ENCODE measurements at regions of chr10 and their contacts with region 1.

Region 1: GRCh38 chr10:51010977-51011376 is 63.3 kb upstream of the PRKG1 start:
- DNase-seq: no peak
- H3K4me3 ChIP-seq: no peak overlapping the region
- H3K27ac ChIP-seq: no peak overlapping the region
- H3K4me1 ChIP-seq: peaks cover 0 to 10% (median 6%) of the 10 kb centered on the region in 4 donors
- H3K27me3 ChIP-seq: no peaks in the 10 kb centered on the region
- CTCF ChIP-seq: peak; percentile 46 to 85 (median 79)
- EP300 ChIP-seq: no peak
- POLR2A ChIP-seq: no peak

Region 2: GRCh38 chr10:51047857-51048256 is 36.9 kb after region 1 on chr10:
- intact Hi-C with region 1: loop called (anchors 5 kb)
- DNase-seq: no peak
- H3K4me3 ChIP-seq: no peak overlapping the region
- H3K27ac ChIP-seq: no peak overlapping the region
- H3K4me1 ChIP-seq: peaks cover 0 to 22% (median 9%) of the 10 kb centered on the region in 4 donors
- H3K27me3 ChIP-seq: no peaks in the 10 kb centered on the region
- CTCF ChIP-seq: peak in 2 of 4 experiments; percentile 22 to 23
- EP300 ChIP-seq: no peak
- POLR2A ChIP-seq: no peak